HepG2 (cell line): ENCODE measurements at regions of chr4 and their contacts with region 1.

Region 1: DNA sequence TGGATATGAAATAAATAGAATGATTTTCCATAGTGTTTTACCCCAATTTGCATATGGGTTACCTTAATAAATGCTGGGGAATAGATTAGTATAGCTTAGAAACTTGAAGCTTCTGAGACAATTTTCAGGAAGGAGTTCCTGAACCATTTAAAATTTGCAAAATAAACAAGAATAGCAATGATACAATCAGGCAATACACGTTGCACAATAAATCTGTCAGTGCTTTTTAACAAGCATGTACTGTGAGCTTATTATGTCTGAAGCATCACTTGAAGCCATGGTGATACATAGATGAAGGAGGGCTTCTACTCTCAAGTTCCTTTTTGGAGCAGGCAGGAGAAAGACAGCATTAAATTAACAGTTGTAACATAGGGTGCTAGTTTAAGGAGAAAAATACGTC is 84.3 kb upstream of the WDFY3 start:
- DNase-seq: no peak
- ATAC-seq: no peak
- H3K4me3 ChIP-seq: no peak overlapping the region
- H3K27ac ChIP-seq: no peak overlapping the region
- H3K4me1 ChIP-seq: peaks cover 40% of the 10 kb centered on the region
- H3K27me3 ChIP-seq: no peaks in the 10 kb centered on the region; a peak in 1 of 5 replicates
- CTCF ChIP-seq: no peak
- EP300 ChIP-seq: no peak
- POLR2A ChIP-seq: no peak
- RAD21 ChIP-seq: no peak

Region 2: GRCh38 chr4:85062466-85062865 is 11.7 kb after region 1 on chr4:
- CTCF ChIA-PET with region 1: no interaction called
- POLR2A ChIA-PET with region 1: no interaction called
- in situ Hi-C with region 1: no loop called
- intact Hi-C with region 1: loop called (anchors 2 kb)
- DNase-seq: no peak
- ATAC-seq: no peak
- H3K4me3 ChIP-seq: no peak overlapping the region
- H3K27ac ChIP-seq: no peak overlapping the region
- H3K4me1 ChIP-seq: no peaks in the 10 kb centered on the region
- H3K27me3 ChIP-seq: no peaks in the 10 kb centered on the region; a peak in 1 of 5 replicates
- CTCF ChIP-seq: no peak
- EP300 ChIP-seq: no peak
- POLR2A ChIP-seq: no peak
- RAD21 ChIP-seq: no peak